ENCODE measurements at regions of chr19 and their contacts with region 1.

Region 1: DNA sequence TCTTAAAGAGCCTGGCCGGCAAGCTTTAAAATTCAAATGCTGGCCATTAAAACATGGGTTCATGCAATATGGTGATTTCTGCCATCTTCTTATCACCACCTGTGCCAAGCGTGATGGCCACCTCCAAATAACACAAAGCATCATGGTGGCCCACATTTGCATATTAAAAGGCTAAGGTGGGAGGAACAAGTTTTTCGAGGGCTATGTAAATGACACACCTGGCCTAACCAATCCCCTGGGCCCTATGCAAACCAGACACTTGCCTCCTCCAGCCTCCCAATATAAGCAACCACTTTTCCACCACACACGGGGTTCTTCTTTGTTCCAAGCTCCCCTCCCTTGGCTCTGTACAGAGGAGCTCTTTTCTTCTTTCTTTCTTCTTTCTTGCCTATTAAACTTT is 14.4 kb downstream of the LILRB4 start:
- DNase-seq: no peak
- ATAC-seq: no peak
- H3K4me3 ChIP-seq: no peak overlapping the region
- H3K27ac ChIP-seq: no peak overlapping the region
- H3K4me1 ChIP-seq: peaks cover 0 to 11% of the 10 kb centered on the region in 2 donors
- H3K27me3 ChIP-seq: peaks cover 0 to 55% of the 10 kb centered on the region in 2 donors
- CTCF ChIP-seq: no peak

Region 2: DNA sequence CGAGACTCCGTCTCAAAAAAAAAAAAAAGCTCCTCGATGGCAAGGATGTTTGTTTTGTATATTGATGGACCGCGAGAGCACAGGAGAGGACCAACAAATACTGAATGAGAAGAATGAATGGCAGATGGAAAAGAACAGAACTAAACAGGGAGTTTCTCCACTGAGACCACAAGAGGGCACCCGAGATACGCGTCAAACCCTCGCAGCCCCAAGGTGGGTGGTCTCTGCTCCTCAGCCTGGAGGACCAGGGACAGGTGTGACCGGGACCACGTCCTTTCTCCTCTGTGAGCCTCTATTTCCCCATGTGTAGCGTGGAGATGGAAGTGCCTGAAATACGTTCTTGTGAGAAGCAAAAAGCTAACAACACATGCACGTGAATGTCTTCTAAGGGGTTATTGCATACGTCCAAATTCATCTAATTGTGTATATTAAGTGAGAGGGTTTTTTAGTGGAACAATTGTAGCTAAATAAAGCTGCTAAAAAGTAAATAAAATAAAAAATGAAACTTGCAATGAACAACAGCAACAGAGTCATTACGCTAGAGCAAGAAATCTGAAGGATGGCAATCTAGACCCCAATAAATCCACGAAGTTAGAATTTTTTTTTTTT is 195.8 kb before region 1 on chr19:
- intact Hi-C with region 1: loop called in 1 of 2 experiments (anchors 5 kb)
- DNase-seq: no peak
- ATAC-seq: peak; percentile 72
- H3K4me3 ChIP-seq: no peak overlapping the region
- H3K27ac ChIP-seq: no peak overlapping the region
- H3K4me1 ChIP-seq: peaks cover 0 to 26% of the 10 kb centered on the region in 2 donors
- H3K27me3 ChIP-seq: peaks cover 0 to 91% of the 10 kb centered on the region in 2 donors
- CTCF ChIP-seq: peak; percentile 56 to 57

Measured in left lung (tissue), 14 donors.